Activated T-helper 2 cell treated with anti-CD3 and anti-CD28 coated beads, Interferon-gamma antibody, Interleukin-2, Interleukin-4, amounts not matched to agents 10 μg/mL and 5 μg/mL and 100 μg/mL, durations not matched to agents 14 hours and 24 hours and 36 hours (primary cell): ENCODE measurements at regions of chr12 and their contacts with region 1.

Region 1: DNA sequence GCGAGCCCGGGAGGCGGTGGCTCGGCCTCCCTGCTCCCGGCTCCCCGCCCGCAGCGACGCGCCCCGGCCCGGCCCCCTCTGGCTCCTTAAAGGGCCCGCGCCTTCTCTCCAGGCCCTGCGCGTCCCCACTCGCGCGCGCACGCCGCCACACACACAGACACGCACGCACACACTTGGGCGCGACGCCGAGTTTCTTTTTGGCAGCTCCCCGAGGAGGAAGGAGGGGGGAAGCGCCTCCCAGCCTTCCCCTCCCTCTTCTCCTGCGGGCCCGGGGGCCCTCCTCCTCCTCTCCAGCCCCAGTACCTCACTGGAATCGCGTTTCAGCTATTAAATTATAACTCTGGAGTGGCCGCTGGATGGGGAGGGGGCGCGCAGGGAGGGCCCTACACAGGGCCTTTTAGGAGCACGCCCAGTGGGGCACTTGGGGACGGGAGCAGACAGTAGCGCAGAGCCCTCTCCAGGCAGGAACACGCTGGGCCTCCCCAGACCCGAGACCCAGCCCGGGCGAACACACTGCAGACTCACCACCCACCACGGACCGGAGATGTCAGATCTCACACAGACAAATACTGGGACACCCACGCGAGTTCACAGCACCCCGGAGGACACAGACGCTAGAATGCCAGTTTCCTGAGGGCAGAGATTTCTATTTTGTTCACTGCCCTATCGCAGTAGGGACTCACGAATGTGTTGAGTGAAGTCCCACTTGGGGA is 405 bp upstream of the NCOR2 start:
- DNase-seq: peak; percentile 75
- H3K4me3 Mint-ChIP-seq: peak overlapping the region; percentile 78
- H3K27ac Mint-ChIP-seq: peak overlapping the region; percentile 78
- H3K4me1 Mint-ChIP-seq: peaks cover 10% of the 10 kb centered on the region
- H3K27me3 Mint-ChIP-seq: peaks cover 3% of the 10 kb centered on the region

Region 2: DNA sequence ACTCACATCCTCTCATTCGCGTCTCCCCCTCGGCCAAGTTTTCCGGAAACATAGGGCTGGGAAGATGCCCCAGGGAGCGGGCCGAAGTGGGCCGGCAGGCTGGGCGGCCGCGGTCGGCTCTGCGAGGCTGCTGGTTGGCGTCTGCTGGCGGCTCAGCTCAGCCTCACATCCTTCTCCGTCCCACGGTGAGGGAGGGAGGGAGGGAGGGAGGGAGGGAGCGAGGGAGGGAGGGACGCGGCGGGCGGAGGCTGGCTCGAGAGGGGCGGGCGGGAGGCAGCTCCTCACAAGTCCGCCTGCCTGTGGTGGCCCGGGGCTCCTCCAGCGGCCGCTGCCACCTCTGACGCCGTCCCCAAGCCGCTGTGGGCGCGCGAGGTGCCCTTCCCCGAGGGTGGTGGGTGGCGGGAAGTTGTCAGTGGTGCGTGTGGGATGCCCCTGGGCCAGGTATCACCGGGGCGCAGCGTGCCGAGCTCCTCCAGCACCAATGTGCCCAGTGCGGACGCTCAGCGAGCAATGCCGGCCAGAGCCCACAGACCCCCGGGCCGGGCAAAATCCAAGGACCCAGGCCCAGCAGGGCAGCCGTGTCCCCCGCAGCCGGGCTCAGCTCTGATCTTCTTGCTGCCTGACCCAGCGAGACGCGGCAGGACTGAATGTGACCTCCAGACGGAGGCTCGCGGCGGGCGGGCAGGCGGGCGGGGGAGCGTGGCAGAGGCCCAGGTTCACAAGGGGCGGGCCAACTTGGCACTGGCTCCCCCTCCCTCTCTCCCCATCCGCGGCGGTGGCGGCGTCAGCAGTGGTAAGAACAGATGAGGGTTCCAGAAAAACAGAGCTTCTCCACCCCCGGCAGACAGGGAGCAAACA is 178.9 kb before region 1 on chr12:
- intact Hi-C with region 1: loop called (anchors 10 kb)
- DNase-seq: peak; percentile 43
- H3K4me3 Mint-ChIP-seq: peak overlapping the region; percentile 21
- H3K27ac Mint-ChIP-seq: no peak overlapping the region
- H3K4me1 Mint-ChIP-seq: peaks cover 22% of the 10 kb centered on the region
- H3K27me3 Mint-ChIP-seq: no peaks in the 10 kb centered on the region